Caco-2 (cell line): ENCODE measurements at regions of chr7 and their contacts with region 1.

Region 1: GRCh38 chr7:16071246-16071857 is 350.0 kb downstream of the CRPPA start:
- DNase-seq: peak in 1 of 2 experiments; percentile 64
- H3K4me3 ChIP-seq: no peak overlapping the region
- H3K4me3 Mint-ChIP-seq: no peak overlapping the region
- H3K27ac Mint-ChIP-seq: no peak overlapping the region
- H3K4me1 ChIP-seq: no peaks in the 10 kb centered on the region
- H3K4me1 Mint-ChIP-seq: no peaks in the 10 kb centered on the region
- H3K27me3 ChIP-seq: no peaks in the 10 kb centered on the region
- H3K27me3 Mint-ChIP-seq: no peaks in the 10 kb centered on the region
- CTCF ChIP-seq: peak; percentile 70 to 75

Region 2: DNA sequence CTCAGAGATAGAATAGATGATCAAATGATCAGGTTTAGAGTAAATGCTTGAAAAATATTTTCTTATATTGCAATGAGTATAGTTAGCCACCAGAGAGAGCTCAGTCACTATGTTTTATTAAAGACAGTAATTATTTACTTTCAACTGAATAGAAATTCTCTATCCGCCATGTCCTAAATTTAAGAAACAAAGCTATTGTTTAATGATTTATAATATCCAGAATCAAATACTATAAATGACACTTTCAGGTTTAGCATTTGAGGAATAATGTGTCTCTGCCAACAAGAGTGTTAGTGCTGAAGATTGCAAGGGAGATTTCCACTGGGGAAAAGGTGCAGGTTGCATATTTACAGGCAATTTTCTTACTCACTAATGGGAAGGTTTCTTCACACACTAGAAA is 1353.5 kb before region 1 on chr7:
- CTCF ChIA-PET with region 1: no interaction called
- POLR2A ChIA-PET with region 1: no interaction called
- intact Hi-C with region 1: loop called (anchors 10 kb)
- DNase-seq: no peak
- H3K4me3 ChIP-seq: no peak overlapping the region
- H3K4me3 Mint-ChIP-seq: no peak overlapping the region
- H3K27ac Mint-ChIP-seq: no peak overlapping the region
- H3K4me1 ChIP-seq: no peaks in the 10 kb centered on the region
- H3K4me1 Mint-ChIP-seq: peaks cover 11% of the 10 kb centered on the region
- H3K27me3 ChIP-seq: no peaks in the 10 kb centered on the region
- H3K27me3 Mint-ChIP-seq: no peaks in the 10 kb centered on the region
- CTCF ChIP-seq: peak; percentile 19 to 49

Region 3: GRCh38 chr7:14950013-14950412 is 1121.3 kb before region 1 on chr7:
- CTCF ChIA-PET with region 1: no interaction called
- POLR2A ChIA-PET with region 1: no interaction called
- intact Hi-C with region 1: no loop called
- DNase-seq: no peak
- H3K4me3 ChIP-seq: no peak overlapping the region
- H3K4me3 Mint-ChIP-seq: no peak overlapping the region
- H3K27ac Mint-ChIP-seq: no peak overlapping the region
- H3K4me1 ChIP-seq: no peaks in the 10 kb centered on the region
- H3K4me1 Mint-ChIP-seq: no peaks in the 10 kb centered on the region
- H3K27me3 ChIP-seq: no peaks in the 10 kb centered on the region
- H3K27me3 Mint-ChIP-seq: peaks cover 7% of the 10 kb centered on the region
- CTCF ChIP-seq: no peak

Region 4: DNA sequence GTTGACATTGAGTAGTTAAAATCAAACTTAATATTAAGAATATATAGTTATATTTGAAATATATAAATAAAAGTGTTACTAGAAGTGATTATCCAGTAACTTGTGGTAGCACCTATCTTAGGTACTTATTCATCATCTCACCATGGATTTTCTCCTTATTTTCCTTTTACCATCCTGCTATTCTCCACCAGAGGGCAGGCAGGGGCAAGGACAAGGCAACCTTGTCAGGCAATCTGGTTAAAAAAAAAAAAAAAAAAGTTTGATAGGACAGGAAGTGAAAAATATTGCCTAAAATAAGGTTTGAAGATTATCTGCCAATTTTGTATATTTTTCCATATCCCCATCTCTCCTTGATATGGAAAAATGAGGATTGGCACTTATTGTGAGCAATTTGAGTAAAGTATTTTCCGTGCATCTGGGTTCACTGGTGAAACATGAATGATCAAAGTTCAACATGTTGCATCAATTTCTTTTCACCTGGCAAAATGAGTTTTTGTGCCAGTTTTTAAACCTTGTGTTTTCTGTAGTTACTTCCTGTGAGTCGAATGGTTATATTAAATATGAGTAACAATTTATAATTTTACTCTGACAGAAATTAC is 766.3 kb before region 1 on chr7:
- CTCF ChIA-PET with region 1: no interaction called
- POLR2A ChIA-PET with region 1: no interaction called
- intact Hi-C with region 1: loop called (anchors 1 kb)
- DNase-seq: peak; percentile 49 to 69
- H3K4me3 ChIP-seq: no peak overlapping the region
- H3K4me3 Mint-ChIP-seq: no peak overlapping the region
- H3K27ac Mint-ChIP-seq: no peak overlapping the region
- H3K4me1 ChIP-seq: no peaks in the 10 kb centered on the region
- H3K4me1 Mint-ChIP-seq: no peaks in the 10 kb centered on the region
- H3K27me3 ChIP-seq: no peaks in the 10 kb centered on the region
- H3K27me3 Mint-ChIP-seq: no peaks in the 10 kb centered on the region
- CTCF ChIP-seq: peak; percentile 73 to 85

Region 5: GRCh38 chr7:15326044-15326644 is 745.2 kb before region 1 on chr7:
- CTCF ChIA-PET with region 1: no interaction called
- POLR2A ChIA-PET with region 1: no interaction called
- intact Hi-C with region 1: loop called (anchors 1 kb)
- DNase-seq: peak in 1 of 2 experiments; percentile 19
- H3K4me3 ChIP-seq: no peak overlapping the region
- H3K4me3 Mint-ChIP-seq: no peak overlapping the region
- H3K27ac Mint-ChIP-seq: no peak overlapping the region
- H3K4me1 ChIP-seq: no peaks in the 10 kb centered on the region
- H3K4me1 Mint-ChIP-seq: peaks cover 5% of the 10 kb centered on the region
- H3K27me3 ChIP-seq: no peaks in the 10 kb centered on the region
- H3K27me3 Mint-ChIP-seq: peaks cover 4% of the 10 kb centered on the region
- CTCF ChIP-seq: peak; percentile 53 to 59

Region 6: GRCh38 chr7:15561835-15562234 is 509.5 kb before region 1 on chr7 and contains the start of gene AGMO:
- CTCF ChIA-PET with region 1: no interaction called
- POLR2A ChIA-PET with region 1: no interaction called
- intact Hi-C with region 1: loop called (anchors 5 kb)
- DNase-seq: no peak
- H3K4me3 ChIP-seq: no peak within 1 kb of the TSS
- H3K4me3 Mint-ChIP-seq: no peak within 1 kb of the TSS
- H3K27ac Mint-ChIP-seq: no peak within 1 kb of the TSS
- H3K4me1 ChIP-seq: peaks cover 2% of the 10 kb centered on the region
- H3K4me1 Mint-ChIP-seq: no peaks in the 10 kb centered on the region
- H3K27me3 ChIP-seq: no peaks in the 10 kb centered on the region
- H3K27me3 Mint-ChIP-seq: peaks cover 6% of the 10 kb centered on the region
- CTCF ChIP-seq: no peak
- total RNA-seq, gene AGMO: 0.16 and 0.28 TPM in 2 replicates

Region 7: DNA sequence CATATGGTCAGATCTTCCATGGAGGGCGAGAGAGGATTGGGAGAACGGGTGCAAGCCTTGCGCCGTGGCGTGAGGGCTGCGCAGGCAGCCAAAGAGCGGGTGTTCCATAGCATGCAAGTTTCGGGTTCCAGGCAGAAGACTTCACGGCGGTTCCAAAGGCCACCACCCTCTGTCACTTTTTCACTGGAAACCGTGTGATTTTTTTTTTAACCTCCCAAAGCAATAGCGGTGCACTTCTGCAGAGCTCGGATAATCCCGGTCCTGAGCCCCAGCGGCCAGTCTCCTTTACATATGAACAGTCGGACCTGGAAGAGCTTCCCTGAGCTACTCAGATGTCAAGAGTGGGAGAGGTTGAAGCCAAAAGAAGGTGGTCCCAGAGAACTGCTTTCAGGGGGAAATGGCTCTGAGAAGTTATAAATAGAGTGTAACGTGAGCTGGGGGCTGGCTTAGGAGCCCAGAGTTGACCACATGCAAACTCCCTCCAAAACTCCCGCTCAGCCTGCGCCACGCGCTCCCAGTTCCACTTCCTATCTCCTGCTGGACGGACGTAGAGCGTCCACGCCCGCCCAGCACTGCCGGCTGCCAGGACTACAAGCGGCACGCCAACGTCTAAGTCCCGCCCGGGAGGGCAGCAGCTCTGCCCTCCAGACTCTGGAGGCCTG is 384.9 kb before region 1 on chr7 and contains the start of gene MEOX2:
- CTCF ChIA-PET with region 1: no interaction called
- POLR2A ChIA-PET with region 1: no interaction called
- intact Hi-C with region 1: loop called (anchors 5 kb)
- DNase-seq: peak in 1 of 2 experiments; percentile 26
- H3K4me3 ChIP-seq: peak within 1 kb of the TSS; percentile 19
- H3K4me3 Mint-ChIP-seq: peak within 1 kb of the TSS; percentile 71
- H3K27ac Mint-ChIP-seq: no peak within 1 kb of the TSS
- H3K4me1 ChIP-seq: no peaks in the 10 kb centered on the region; the same call in none of the 2 replicates
- H3K4me1 Mint-ChIP-seq: peaks cover 10% of the 10 kb centered on the region
- H3K27me3 ChIP-seq: peaks cover 12% of the 10 kb centered on the region
- H3K27me3 Mint-ChIP-seq: peaks cover 30% of the 10 kb centered on the region
- CTCF ChIP-seq: no peak
- total RNA-seq, gene MEOX2: not detected in 2 replicates

Region 8: DNA sequence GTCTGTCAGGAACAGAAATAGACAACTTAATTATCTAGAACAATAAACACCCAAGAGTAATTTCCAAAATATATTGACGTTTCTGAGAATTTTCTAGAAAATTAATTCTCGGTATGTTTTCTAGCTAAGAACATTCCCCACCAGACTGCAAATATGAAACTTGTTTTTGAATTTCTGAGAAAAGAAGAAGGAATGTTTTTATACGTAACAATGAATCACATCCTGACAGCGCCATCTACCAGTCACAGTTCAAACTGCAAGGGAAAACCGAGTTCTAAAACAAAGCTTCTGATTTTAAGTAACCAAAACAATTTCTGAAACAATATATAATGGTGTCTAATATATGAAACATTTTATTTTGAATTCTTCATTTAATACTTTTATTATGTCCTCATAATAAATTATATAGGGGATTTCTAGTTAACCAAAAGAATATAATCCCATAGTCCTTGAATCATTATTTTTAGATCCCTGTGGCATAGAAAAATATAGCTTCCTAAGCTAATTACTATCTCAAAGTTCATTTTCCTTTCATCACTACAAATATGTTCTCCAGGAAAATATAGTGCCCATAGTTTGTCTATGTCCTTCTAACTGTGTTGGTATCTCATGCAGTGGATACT is 350.4 kb before region 1 on chr7:
- CTCF ChIA-PET with region 1: no interaction called
- POLR2A ChIA-PET with region 1: no interaction called
- intact Hi-C with region 1: loop called (anchors 5 kb)
- DNase-seq: peak in 1 of 2 experiments; percentile 43
- H3K4me3 ChIP-seq: no peak overlapping the region
- H3K4me3 Mint-ChIP-seq: no peak overlapping the region
- H3K27ac Mint-ChIP-seq: no peak overlapping the region
- H3K4me1 ChIP-seq: peaks cover 9% of the 10 kb centered on the region
- H3K4me1 Mint-ChIP-seq: no peaks in the 10 kb centered on the region
- H3K27me3 ChIP-seq: no peaks in the 10 kb centered on the region
- H3K27me3 Mint-ChIP-seq: no peaks in the 10 kb centered on the region
- CTCF ChIP-seq: peak; percentile 73 to 80

Region 9: GRCh38 chr7:15932318-15932717 is 139.0 kb before region 1 on chr7:
- CTCF ChIA-PET with region 1: no interaction called
- POLR2A ChIA-PET with region 1: no interaction called
- intact Hi-C with region 1: no loop called
- DNase-seq: no peak
- H3K4me3 ChIP-seq: no peak overlapping the region
- H3K4me3 Mint-ChIP-seq: no peak overlapping the region
- H3K27ac Mint-ChIP-seq: no peak overlapping the region
- H3K4me1 ChIP-seq: no peaks in the 10 kb centered on the region
- H3K4me1 Mint-ChIP-seq: no peaks in the 10 kb centered on the region
- H3K27me3 ChIP-seq: no peaks in the 10 kb centered on the region
- H3K27me3 Mint-ChIP-seq: no peaks in the 10 kb centered on the region
- CTCF ChIP-seq: no peak

Region 10: DNA sequence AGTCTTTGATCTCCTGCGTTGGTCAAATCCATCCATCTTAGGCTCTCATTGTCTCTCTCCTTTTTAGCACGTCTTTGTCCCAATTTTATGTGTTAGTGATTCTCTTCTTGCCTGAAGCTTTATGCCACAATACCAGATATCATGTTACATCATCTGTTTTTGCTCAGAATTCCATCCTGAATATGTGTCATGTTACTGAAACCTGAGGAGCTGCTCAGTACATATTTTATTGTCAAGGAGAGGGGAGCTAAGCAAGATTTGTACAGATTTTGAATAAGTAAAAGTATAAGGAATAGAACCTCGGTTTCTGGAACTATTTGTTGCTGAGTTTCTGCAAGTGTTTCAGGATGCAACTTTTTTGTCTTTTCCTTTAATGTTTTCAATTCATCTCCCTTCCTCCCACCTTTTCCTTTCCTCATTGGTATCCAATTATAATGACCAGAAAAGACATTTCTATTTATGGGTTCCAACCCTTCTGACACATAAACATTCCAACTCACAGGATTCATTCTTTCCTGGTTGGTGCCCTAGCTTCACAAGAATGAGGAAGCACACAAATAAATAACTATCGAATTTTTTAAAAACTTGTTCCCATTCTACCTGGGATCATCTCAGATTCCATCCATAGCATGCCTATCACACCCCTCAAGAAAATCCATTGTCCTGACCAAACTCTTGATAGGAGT is 58.2 kb after region 1 on chr7:
- CTCF ChIA-PET with region 1: no interaction called
- POLR2A ChIA-PET with region 1: no interaction called
- intact Hi-C with region 1: no loop called
- DNase-seq: no peak
- H3K4me3 ChIP-seq: no peak overlapping the region
- H3K4me3 Mint-ChIP-seq: no peak overlapping the region
- H3K27ac Mint-ChIP-seq: peak overlapping the region; percentile 3
- H3K4me1 ChIP-seq: 0 out of 2 replicates have a peak, but pooled peaks cover 2% of the 10 kb centered on the region
- H3K4me1 Mint-ChIP-seq: peaks cover 11% of the 10 kb centered on the region
- H3K27me3 ChIP-seq: no peaks in the 10 kb centered on the region
- H3K27me3 Mint-ChIP-seq: no peaks in the 10 kb centered on the region
- CTCF ChIP-seq: no peak

Region 11: DNA sequence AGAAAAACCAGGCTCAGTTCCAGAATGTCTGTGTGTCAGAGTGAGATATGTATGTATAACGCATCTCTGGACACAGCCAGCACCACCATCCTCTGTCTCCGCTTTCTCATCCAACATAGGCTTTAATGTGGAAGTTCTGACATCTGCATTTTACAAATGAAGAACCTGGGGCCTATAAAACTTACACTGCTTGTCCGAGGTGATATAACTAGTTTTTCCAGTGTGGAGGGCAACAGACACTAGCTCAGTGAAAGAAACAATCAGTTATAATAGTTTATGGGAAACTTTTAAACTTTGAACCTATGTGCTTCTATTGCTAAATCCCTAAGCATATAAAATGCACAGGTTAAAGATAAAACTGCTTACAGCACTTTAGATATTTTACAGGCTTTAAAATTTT is 141.3 kb after region 1 on chr7:
- CTCF ChIA-PET with region 1: no interaction called
- POLR2A ChIA-PET with region 1: no interaction called
- intact Hi-C with region 1: no loop called
- DNase-seq: peak in 1 of 2 experiments; percentile 40
- H3K4me3 ChIP-seq: no peak overlapping the region
- H3K4me3 Mint-ChIP-seq: no peak overlapping the region
- H3K27ac Mint-ChIP-seq: peak overlapping the region; percentile 18
- H3K4me1 ChIP-seq: peaks cover 17% of the 10 kb centered on the region
- H3K4me1 Mint-ChIP-seq: peaks cover 9% of the 10 kb centered on the region
- H3K27me3 ChIP-seq: no peaks in the 10 kb centered on the region
- H3K27me3 Mint-ChIP-seq: no peaks in the 10 kb centered on the region
- CTCF ChIP-seq: no peak